ENCODE measurements at regions of chr20 and their contacts with region 1.

Region 1: GRCh38 chr20:32091888-32092346 is 17.6 kb upstream of the TM9SF4 start:
- DNase-seq: peak; percentile 85
- ATAC-seq: peak; percentile 85
- H3K4me3 Mint-ChIP-seq: no peak overlapping the region
- H3K27ac Mint-ChIP-seq: no peak overlapping the region
- H3K4me1 Mint-ChIP-seq: no peaks in the 10 kb centered on the region
- H3K27me3 Mint-ChIP-seq: peaks cover 18% of the 10 kb centered on the region

Region 2: DNA sequence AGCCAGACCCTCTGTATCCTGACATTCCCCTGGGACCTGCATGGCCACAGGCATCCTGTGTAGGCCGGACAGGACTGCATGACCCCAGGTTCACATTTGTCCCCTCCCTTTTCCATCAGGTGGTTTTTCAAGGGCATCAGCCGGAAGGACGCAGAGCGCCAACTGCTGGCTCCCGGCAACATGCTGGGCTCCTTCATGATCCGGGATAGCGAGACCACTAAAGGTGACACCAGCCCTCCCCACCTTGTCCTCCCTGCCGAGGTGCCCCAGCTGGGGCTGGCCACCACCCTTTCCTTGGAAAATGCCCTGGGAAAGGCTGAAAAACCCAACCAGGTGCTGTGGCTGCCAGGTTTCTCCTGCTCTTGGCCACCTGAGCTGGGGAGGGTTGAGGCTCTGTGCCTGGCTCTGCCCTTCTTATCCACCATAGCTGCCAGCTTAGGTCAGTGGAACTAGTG is 12.2 kb before region 1 on chr20:
- CTCF ChIA-PET with region 1: interaction called, 22 read pairs
- DNase-seq: no peak
- ATAC-seq: no peak
- H3K4me3 Mint-ChIP-seq: no peak overlapping the region
- H3K27ac Mint-ChIP-seq: no peak overlapping the region
- H3K4me1 Mint-ChIP-seq: no peaks in the 10 kb centered on the region
- H3K27me3 Mint-ChIP-seq: peaks cover 51% of the 10 kb centered on the region

Region 3: DNA sequence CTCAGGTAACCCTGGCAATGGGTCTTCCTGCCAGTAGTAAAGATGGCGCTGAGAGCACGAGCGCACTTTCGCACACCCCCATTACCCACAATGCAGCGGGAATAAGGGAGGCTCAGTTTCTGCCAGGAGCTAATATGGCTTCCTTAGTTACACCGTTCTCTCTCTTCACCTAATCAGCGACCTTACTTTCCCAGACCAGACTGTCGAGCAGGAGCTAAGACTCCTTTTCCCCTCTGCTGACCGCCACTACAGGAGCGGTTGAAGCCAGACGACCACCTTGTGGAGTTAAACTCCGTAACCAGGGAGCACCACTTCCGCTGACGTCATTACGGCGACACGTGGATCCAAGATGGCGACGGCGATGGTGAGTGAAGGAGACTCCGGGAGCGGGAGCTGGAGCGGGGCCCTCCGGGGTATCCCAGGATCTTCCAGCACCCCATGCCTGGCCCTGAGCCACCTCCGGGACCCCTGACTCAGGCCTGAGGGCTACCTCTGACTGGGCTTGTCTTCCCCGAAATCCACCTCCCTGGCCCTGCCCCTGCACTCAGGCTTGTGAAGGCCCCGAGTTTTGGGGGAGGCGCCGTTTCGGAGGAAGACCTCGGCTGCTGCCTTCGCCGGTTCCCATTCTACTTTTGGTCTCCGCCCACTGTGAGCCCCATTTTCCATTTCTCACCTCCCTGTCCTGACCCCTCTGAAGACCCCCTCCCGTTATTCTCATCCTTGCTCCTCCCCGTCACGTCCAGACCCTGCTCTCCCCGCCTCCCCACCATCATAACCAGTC is 17.7 kb after region 1 on chr20 and contains the start of gene TM9SF4:
- CTCF ChIA-PET with region 1: interaction called, 20 read pairs
- DNase-seq: peak; percentile 94
- ATAC-seq: peak; percentile 83
- H3K4me3 Mint-ChIP-seq: peak within 1 kb of the TSS; percentile 88
- H3K27ac Mint-ChIP-seq: peak within 1 kb of the TSS; percentile 100
- H3K4me1 Mint-ChIP-seq: peaks cover 30% of the 10 kb centered on the region
- H3K27me3 Mint-ChIP-seq: peaks cover 7% of the 10 kb centered on the region
- total RNA-seq, gene TM9SF4: 35.7 to 39.1 TPM

Region 4: DNA sequence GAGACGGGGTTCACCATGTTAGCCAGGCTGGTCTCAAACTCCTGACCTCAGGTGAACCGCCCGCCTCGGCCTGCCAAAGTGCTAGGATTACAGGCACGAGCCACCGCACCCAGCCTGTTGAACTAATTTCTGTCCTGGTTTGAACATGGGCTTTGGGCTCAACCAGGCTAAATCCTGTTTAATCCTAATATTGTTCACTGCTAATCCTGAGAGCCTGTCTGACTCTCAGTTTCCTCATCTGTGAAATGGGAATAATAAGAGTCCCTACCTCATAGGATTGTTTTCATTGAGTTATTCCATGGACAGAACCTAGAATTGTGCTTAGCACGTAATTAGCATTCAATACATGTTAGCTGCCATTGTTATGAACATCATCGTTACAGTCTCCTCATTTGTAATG is 35.0 kb after region 1 on chr20:
- CTCF ChIA-PET with region 1: no interaction called
- DNase-seq: no peak
- ATAC-seq: no peak
- H3K4me3 Mint-ChIP-seq: no peak overlapping the region
- H3K27ac Mint-ChIP-seq: no peak overlapping the region
- H3K4me1 Mint-ChIP-seq: peaks cover 2% of the 10 kb centered on the region
- H3K27me3 Mint-ChIP-seq: no peaks in the 10 kb centered on the region

Measured in activated CD8-positive, alpha-beta memory T cell treated with anti-CD3 and anti-CD28 coated beads, Interleukin-2, amount 10 ng/mL, durations not matched to agents 7 days and 5 days (primary cell).